ENCODE measurements at regions of chr5 and their contacts with region 1.

Region 1: GRCh38 chr5:64784451-64785025 is 15.8 kb downstream of the CWC27 start:
- DNase-seq: peak; percentile 46 to 49
- H3K4me3 ChIP-seq: no peak overlapping the region
- H3K27ac ChIP-seq: no peak overlapping the region
- H3K4me1 ChIP-seq: no peaks in the 10 kb centered on the region
- H3K27me3 ChIP-seq: no peaks in the 10 kb centered on the region
- CTCF ChIP-seq: peak; percentile 94

Region 2: DNA sequence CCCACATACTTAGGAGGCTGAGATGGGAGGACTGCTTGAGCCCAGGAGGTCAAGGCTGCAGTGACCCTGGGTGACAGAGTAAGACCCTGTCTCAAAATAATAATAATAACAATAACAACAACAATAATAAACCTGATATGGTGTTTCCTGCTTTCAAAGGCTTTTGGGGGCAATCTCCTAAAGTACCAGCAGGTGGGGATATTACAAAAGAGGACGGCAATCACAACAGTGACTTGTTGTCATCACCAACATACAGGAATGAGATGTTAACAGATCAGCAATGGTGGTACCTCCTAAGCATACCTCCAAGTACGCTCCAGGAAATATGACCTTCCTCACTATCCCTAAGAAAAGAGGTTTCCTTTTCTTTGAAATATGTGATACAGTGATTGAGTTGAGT is 710.0 kb before region 1 on chr5:
- CTCF ChIA-PET with region 1: no interaction called
- POLR2A ChIA-PET with region 1: no interaction called
- intact Hi-C with region 1: loop called (anchors 5 kb)
- DNase-seq: peak in 1 of 2 experiments; percentile 1
- H3K4me3 ChIP-seq: no peak overlapping the region
- H3K27ac ChIP-seq: no peak overlapping the region
- H3K4me1 ChIP-seq: no peaks in the 10 kb centered on the region
- H3K27me3 ChIP-seq: no peaks in the 10 kb centered on the region
- CTCF ChIP-seq: peak; percentile 62

Region 3: DNA sequence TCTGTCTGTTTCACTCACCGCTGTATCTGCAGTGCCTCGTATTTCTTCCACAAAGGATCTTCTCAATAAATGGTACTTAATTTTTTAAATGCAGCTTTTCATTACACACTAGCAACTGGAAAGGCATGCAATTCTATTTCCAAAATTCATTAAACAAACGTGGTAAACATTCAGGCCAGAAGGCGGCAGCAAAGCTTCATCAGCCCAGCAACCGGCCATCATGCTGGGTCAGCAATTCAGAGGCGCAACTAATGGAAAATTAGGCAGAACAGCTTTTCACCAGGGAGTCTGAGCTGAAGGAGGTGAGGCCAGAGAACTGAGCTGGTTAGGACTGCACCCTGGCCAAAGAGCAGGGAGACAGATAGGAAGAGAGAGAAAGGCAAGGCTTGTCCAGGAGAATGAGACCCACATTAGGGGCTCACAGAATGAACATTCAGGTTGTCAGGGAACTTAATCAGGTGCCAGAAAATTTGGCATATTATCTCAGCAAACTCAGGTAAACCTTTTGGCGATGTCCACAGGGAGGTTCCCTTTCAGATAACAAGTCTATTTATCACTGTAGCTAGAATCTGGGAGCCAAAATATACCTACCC is 636.6 kb before region 1 on chr5:
- CTCF ChIA-PET with region 1: no interaction called
- POLR2A ChIA-PET with region 1: no interaction called
- intact Hi-C with region 1: loop called (anchors 5 kb)
- DNase-seq: peak in 1 of 2 experiments; percentile 34
- H3K4me3 ChIP-seq: no peak overlapping the region
- H3K27ac ChIP-seq: no peak overlapping the region
- H3K4me1 ChIP-seq: no peaks in the 10 kb centered on the region
- H3K27me3 ChIP-seq: no peaks in the 10 kb centered on the region
- CTCF ChIP-seq: peak; percentile 76

Region 4: GRCh38 chr5:64229163-64229774 is 555.3 kb before region 1 on chr5:
- CTCF ChIA-PET with region 1: no interaction called
- POLR2A ChIA-PET with region 1: no interaction called
- intact Hi-C with region 1: loop called (anchors 1 kb)
- DNase-seq: no peak
- H3K4me3 ChIP-seq: no peak overlapping the region
- H3K27ac ChIP-seq: no peak overlapping the region
- H3K4me1 ChIP-seq: no peaks in the 10 kb centered on the region
- H3K27me3 ChIP-seq: no peaks in the 10 kb centered on the region
- CTCF ChIP-seq: peak; percentile 81

Region 5: DNA sequence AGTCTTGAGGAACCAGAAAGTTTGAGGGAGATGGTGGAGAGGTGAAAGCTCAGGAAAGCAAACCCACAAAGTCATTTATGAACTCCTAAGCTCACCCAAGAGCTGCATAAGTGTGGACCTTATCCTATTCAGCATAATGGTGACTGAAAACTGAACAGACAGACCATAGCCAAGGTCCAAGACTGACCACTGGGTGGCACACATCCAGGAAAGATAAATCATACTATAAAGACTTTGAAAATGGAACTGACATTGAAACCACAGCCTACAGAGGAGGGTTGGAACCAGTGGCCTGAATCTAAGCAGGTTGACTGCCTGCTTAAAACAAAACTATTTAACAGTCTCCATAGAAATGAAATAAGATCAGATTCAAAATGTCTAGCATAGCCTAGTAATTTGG is 399.8 kb before region 1 on chr5:
- CTCF ChIA-PET with region 1: no interaction called
- POLR2A ChIA-PET with region 1: no interaction called
- intact Hi-C with region 1: loop called (anchors 1 kb)
- DNase-seq: peak in 1 of 2 experiments; percentile 0
- H3K4me3 ChIP-seq: no peak overlapping the region
- H3K27ac ChIP-seq: no peak overlapping the region
- H3K4me1 ChIP-seq: no peaks in the 10 kb centered on the region
- H3K27me3 ChIP-seq: no peaks in the 10 kb centered on the region
- CTCF ChIP-seq: peak; percentile 63

Region 6: GRCh38 chr5:64634997-64635686 is 149.4 kb before region 1 on chr5:
- CTCF ChIA-PET with region 1: no interaction called
- POLR2A ChIA-PET with region 1: no interaction called
- intact Hi-C with region 1: loop called (anchors 1 kb)
- DNase-seq: no peak
- H3K4me3 ChIP-seq: no peak overlapping the region
- H3K27ac ChIP-seq: no peak overlapping the region
- H3K4me1 ChIP-seq: no peaks in the 10 kb centered on the region
- H3K27me3 ChIP-seq: no peaks in the 10 kb centered on the region
- CTCF ChIP-seq: peak; percentile 91

Region 7: GRCh38 chr5:64666078-64666477 is 118.5 kb before region 1 on chr5:
- CTCF ChIA-PET with region 1: no interaction called
- POLR2A ChIA-PET with region 1: no interaction called
- intact Hi-C with region 1: no loop called
- DNase-seq: no peak
- H3K4me3 ChIP-seq: no peak overlapping the region
- H3K27ac ChIP-seq: no peak overlapping the region
- H3K4me1 ChIP-seq: no peaks in the 10 kb centered on the region
- H3K27me3 ChIP-seq: no peaks in the 10 kb centered on the region
- CTCF ChIP-seq: no peak

Region 8: DNA sequence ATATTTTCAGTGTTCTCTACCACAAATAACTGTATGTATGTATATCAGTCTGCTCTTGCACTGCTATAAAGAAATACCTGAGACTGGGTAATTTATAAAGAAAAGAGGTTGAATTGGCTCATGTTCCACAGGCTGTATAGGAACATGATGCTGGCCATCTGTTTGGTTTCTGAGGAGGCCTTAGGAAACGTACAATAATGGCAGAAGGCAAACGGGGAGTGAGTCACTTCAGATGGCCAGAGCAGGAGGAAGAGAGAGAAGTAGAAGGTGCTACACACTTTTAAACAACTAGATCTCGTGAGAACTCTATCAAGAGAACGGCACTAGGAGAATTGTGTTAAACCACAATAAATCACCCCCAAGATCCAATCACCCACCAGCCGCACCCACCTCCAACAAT is 575.4 kb after region 1 on chr5:
- CTCF ChIA-PET with region 1: no interaction called
- POLR2A ChIA-PET with region 1: no interaction called
- intact Hi-C with region 1: no loop called
- DNase-seq: no peak
- H3K4me3 ChIP-seq: no peak overlapping the region
- H3K27ac ChIP-seq: no peak overlapping the region
- H3K4me1 ChIP-seq: no peaks in the 10 kb centered on the region
- H3K27me3 ChIP-seq: no peaks in the 10 kb centered on the region
- CTCF ChIP-seq: no peak

Measured in PC-9 (cell line).